Left ventricle myocardium superior (tissue), 1 donor: ENCODE measurements at regions of chr9 and their contacts with region 1.

Region 1: GRCh38 chr9:82513242-82513751 is 524.7 kb downstream of the SPATA31D1 start:
- DNase-seq: no peak
- ATAC-seq: peak; percentile 66

Region 2: DNA sequence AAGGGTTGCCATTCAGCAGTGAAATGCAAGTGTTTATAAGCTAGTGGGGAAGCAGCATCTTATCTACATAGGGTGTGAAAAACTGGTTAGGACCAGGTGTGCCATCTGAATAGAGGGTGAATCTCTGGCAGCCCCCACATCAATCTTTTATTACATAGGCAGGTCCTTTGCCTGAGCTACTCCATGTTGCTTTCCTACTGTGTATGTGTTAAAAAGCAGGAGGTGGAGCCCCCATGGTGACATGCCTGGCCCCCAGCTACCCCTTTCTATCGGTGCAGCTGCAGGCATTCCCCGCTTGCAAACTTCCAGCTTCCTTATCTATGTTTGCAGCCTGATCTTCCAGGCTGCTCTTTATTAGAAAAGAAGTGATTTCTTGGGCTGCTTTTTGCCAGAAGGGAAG is 171.3 kb before region 1 on chr9:
- intact Hi-C with region 1: loop called (anchors 10 kb)
- DNase-seq: no peak
- ATAC-seq: no peak

Region 3: GRCh38 chr9:83346655-83347420 is 833.5 kb after region 1 on chr9:
- intact Hi-C with region 1: no loop called
- DNase-seq: no peak
- ATAC-seq: peak; percentile 44